Mammary epithelial cell (primary cell): ENCODE measurements at regions of chr3 and their contacts with region 1.

Region 1: DNA sequence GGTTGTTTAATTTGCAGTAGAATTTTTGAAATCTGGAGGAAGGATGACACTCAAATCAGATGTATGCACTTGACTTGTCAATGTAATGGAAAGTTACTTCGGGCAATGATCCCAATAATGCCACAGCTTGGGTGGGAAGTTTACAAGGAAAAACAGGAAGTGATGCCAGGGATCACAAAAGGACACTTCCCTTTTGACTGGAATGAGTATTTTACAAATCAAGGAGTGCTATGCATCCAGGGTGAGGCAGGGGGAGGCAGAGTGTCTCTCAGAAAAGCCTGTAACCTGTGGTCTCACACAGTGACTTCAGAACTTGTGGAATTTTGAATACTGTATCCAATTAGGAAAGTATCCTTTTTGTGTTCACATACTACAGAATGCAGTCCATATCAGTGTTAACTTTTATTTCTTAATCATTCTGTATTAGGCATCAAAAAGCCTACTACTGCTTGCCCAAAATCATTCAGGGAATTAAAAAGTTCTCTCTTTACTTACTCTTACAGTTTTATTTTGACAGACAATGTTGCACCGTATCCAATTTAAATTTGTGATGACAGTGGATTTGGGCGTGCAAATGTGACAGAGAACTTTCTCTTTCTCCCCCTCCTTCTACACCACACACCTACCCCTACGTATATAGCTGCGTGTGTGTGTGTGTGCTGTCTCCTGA is 445.1 kb downstream of the MECOM start:
- DNase-seq: peak; percentile 27
- H3K4me3 ChIP-seq: no peak overlapping the region
- H3K27ac ChIP-seq: no peak overlapping the region
- H3K4me1 ChIP-seq: no peaks in the 10 kb centered on the region
- H3K27me3 ChIP-seq: no peaks in the 10 kb centered on the region
- CTCF ChIP-seq: peak; percentile 47 to 67

Region 2: GRCh38 chr3:169041677-169042171 is 176.7 kb before region 1 on chr3:
- CTCF ChIA-PET with region 1: no interaction called
- dilution Hi-C with region 1: no loop called
- in situ Hi-C with region 1: no loop called
- intact Hi-C with region 1: loop called (anchors 5 kb)
- DNase-seq: peak; percentile 43
- H3K4me3 ChIP-seq: no peak overlapping the region
- H3K27ac ChIP-seq: peak overlapping the region; percentile 37
- H3K4me1 ChIP-seq: peaks cover 33% of the 10 kb centered on the region
- H3K27me3 ChIP-seq: no peaks in the 10 kb centered on the region
- CTCF ChIP-seq: peak; percentile 63 to 68

Region 3: GRCh38 chr3:169232863-169233262 is 14.4 kb after region 1 on chr3:
- CTCF ChIA-PET with region 1: no interaction called
- dilution Hi-C with region 1: no loop called
- in situ Hi-C with region 1: no loop called
- intact Hi-C with region 1: loop called (anchors 1 kb)
- DNase-seq: no peak
- H3K4me3 ChIP-seq: no peak overlapping the region
- H3K27ac ChIP-seq: no peak overlapping the region
- H3K4me1 ChIP-seq: no peaks in the 10 kb centered on the region
- H3K27me3 ChIP-seq: no peaks in the 10 kb centered on the region
- CTCF ChIP-seq: no peak

Region 4: GRCh38 chr3:169604568-169604967 is 386.1 kb after region 1 on chr3:
- CTCF ChIA-PET with region 1: no interaction called
- dilution Hi-C with region 1: no loop called
- in situ Hi-C with region 1: no loop called
- intact Hi-C with region 1: loop called (anchors 5 kb)
- DNase-seq: peak; percentile 4
- H3K4me3 ChIP-seq: no peak overlapping the region
- H3K27ac ChIP-seq: no peak overlapping the region
- H3K4me1 ChIP-seq: no peaks in the 10 kb centered on the region
- H3K27me3 ChIP-seq: peaks cover 2% of the 10 kb centered on the region
- CTCF ChIP-seq: peak; percentile 15 to 48

Region 5: GRCh38 chr3:169668957-169669681 is 450.7 kb after region 1 on chr3:
- CTCF ChIA-PET with region 1: interaction called, 5 read pairs
- dilution Hi-C with region 1: no loop called
- in situ Hi-C with region 1: no loop called
- intact Hi-C with region 1: loop called (anchors 1 kb)
- DNase-seq: peak; percentile 67
- H3K4me3 ChIP-seq: peak overlapping the region; percentile 41 to 46 (median 43)
- H3K27ac ChIP-seq: no peak overlapping the region
- H3K4me1 ChIP-seq: peaks cover 12% of the 10 kb centered on the region
- H3K27me3 ChIP-seq: peaks cover 50% of the 10 kb centered on the region
- CTCF ChIP-seq: peak; percentile 37 to 88

Region 6: DNA sequence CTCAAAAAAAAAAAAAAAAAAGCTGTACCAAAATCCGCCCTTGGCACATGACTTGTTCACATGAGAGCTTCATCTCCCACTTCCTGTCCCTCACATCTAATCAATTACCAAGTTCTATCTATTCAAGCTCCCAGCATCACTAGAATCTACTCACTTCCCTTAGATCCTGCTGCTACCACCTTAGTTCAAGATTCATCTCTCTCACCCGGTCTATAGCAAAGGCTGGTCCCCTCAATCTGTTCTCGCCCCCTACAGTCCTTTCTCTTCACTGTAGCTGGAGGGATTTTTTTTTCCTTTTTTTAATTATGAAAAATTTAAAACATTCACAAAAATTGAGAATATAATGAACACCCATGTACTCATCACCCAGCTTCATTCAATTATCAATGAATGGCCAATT is 802.6 kb after region 1 on chr3:
- CTCF ChIA-PET with region 1: no interaction called
- dilution Hi-C with region 1: no loop called
- in situ Hi-C with region 1: no loop called
- intact Hi-C with region 1: no loop called
- DNase-seq: no peak
- H3K4me3 ChIP-seq: no peak overlapping the region
- H3K27ac ChIP-seq: no peak overlapping the region
- H3K4me1 ChIP-seq: no peaks in the 10 kb centered on the region
- H3K27me3 ChIP-seq: peaks cover 6% of the 10 kb centered on the region
- CTCF ChIP-seq: no peak